ENCODE measurements at regions of chr6 and their contacts with region 1.

Region 1: DNA sequence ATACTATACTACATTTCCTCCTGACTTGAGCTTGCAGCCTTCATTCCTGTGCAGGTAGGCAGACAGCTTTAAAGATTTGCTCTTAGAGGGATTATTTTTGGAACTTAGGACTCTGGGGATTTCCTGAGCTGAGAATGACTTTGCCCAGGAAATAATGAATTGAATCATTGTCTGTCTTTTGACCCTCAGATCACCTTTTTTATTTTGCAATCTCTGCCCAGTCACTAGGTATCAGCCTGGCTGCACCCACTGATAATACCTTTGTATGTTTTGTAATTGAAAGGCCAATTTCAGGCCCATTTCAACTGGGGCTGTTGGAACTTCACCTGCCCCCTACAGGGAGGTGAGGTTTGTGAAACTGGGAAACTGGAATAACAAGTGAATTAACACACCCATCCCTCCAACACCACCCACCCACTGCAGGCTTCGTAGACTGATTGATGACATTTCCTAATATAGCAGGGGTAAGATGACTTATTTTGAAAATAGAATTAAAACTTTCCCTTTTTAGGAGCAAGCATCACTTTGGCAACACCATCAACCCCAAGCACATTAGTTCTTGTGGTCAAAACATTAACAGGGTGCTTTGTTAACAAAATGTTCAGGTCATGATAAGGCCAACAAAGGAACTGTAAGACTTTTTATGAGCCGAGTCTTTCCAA is 157.1 kb upstream of the CENPW start:
- DNase-seq: peak; percentile 81
- H3K4me3 Mint-ChIP-seq: peak overlapping the region; percentile 44
- H3K27ac Mint-ChIP-seq: peak overlapping the region; percentile 93
- H3K4me1 Mint-ChIP-seq: peaks cover 37% of the 10 kb centered on the region
- H3K27me3 Mint-ChIP-seq: no peaks in the 10 kb centered on the region
- CTCF ChIP-seq: no peak

Region 2: GRCh38 chr6:126312013-126312663 is 129.4 kb after region 1 on chr6:
- CTCF ChIA-PET with region 1: no interaction called
- intact Hi-C with region 1: loop called (anchors 2 kb)
- DNase-seq: peak; percentile 26
- H3K4me3 Mint-ChIP-seq: no peak overlapping the region
- H3K27ac Mint-ChIP-seq: no peak overlapping the region
- H3K4me1 Mint-ChIP-seq: peaks cover 48% of the 10 kb centered on the region
- H3K27me3 Mint-ChIP-seq: no peaks in the 10 kb centered on the region
- CTCF ChIP-seq: peak; percentile 19

Region 3: DNA sequence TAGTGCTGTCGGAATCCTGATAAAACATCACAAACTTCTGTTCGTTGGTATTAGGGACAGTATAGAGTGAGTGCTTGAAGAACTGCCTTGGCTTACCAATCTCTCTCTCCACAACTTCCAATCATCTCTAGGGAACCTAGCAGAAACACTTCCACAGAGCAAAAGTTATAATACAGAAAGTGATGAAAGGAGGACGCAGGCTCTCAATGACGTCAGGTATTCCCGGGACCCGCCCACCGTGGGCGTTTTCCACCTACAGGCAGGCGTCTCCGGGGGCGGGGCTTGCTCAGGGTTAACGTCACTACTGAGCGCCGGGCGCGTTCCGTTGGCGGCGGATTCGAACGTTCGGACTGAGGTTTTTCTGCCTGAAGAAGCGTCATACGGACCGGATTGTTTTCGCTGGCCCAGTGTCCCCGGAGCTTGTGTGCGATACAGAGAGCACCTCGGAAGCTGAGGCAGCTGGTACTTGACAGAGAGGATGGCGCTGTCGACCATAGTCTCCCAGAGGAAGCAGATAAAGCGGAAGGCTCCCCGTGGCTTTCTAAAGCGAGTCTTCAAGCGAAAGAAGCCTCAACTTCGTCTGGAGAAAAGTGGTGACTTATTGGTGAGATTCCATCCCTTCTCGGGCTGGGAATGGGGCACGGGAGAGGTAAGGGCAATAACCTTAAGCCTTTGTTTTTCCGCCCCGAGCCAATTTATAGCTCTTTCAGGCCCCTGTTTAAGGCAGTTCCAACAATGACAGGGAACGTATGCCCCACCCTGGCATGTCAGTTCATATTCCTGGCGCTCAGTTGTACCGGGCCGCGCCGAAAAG is 157.2 kb after region 1 on chr6 and contains the start of gene CENPW:
- CTCF ChIA-PET with region 1: no interaction called
- intact Hi-C with region 1: loop called (anchors 2 kb)
- DNase-seq: peak; percentile 95
- H3K4me3 Mint-ChIP-seq: no peak within 1 kb of the TSS
- H3K27ac Mint-ChIP-seq: peak within 1 kb of the TSS; percentile 78
- H3K4me1 Mint-ChIP-seq: peaks cover 24% of the 10 kb centered on the region
- H3K27me3 Mint-ChIP-seq: no peaks in the 10 kb centered on the region
- CTCF ChIP-seq: no peak
- total RNA-seq, gene CENPW: 66.4 and 73.4 TPM in 2 replicates

Measured in Calu3 (cell line).